B cell (primary cell): ENCODE measurements at regions of chr7 and their contacts with region 1.

Region 1: DNA sequence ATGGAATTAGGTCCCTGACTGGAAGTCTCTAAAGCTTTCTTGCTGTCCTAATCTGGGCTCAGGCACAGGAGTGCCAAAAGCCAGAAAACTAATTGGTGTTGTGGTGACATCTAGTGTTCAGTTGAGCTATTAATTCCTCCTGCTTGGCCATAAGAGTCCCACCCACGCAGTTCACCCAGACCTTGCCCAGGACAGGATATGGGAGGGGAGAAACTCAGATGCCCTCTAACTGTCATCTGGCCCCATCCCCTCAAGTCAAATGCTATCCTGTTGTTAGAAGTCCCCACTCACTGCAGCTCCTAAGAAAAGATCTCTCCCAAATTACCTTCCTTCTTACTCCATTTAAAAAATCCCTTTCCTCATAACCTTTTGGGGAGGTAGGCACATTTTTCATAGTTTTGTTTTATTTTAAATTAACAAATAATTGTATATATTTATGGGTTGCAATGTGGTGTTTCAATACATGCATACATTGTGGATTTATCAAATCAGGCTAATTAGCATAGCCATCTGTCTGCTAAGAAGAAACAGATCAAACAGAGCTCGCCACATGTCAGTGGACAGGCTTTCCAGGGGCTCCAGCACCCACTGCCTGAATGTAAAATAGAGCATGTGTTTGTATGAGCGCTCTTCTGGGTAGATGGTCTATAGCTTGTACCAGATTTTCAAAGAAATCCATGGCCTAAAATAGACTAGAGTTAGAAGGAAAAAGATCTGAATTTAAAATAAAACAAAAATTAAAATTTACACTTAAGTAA is 84.0 kb downstream of the GSAP start:
- DNase-seq: peak; percentile 80
- ATAC-seq: peak; percentile 70
- H3K4me3 ChIP-seq: no peak overlapping the region
- H3K4me3 Mint-ChIP-seq: peak overlapping the region; percentile 38
- H3K27ac ChIP-seq: no peak overlapping the region
- H3K27ac Mint-ChIP-seq: peak overlapping the region; percentile 83
- H3K4me1 ChIP-seq: peaks cover 51 to 52% of the 10 kb centered on the region in 2 donors
- H3K4me1 Mint-ChIP-seq: peaks cover 49% of the 10 kb centered on the region
- H3K27me3 ChIP-seq: no peaks in the 10 kb centered on the region
- H3K27me3 Mint-ChIP-seq: no peaks in the 10 kb centered on the region
- CTCF ChIP-seq: peak; percentile 75

Region 2: GRCh38 chr7:77188731-77189437 is 143.2 kb before region 1 on chr7:
- CTCF ChIA-PET with region 1: interaction called, 5 read pairs
- POLR2A ChIA-PET with region 1: no interaction called
- intact Hi-C with region 1: loop called (anchors 2 kb)
- DNase-seq: no peak
- ATAC-seq: no peak
- H3K4me3 ChIP-seq: no peak overlapping the region
- H3K4me3 Mint-ChIP-seq: no peak overlapping the region
- H3K27ac ChIP-seq: no peak overlapping the region
- H3K27ac Mint-ChIP-seq: no peak overlapping the region
- H3K4me1 ChIP-seq: peaks cover 24 to 25% of the 10 kb centered on the region in 2 donors
- H3K4me1 Mint-ChIP-seq: peaks cover 27% of the 10 kb centered on the region
- H3K27me3 ChIP-seq: no peaks in the 10 kb centered on the region
- H3K27me3 Mint-ChIP-seq: no peaks in the 10 kb centered on the region
- CTCF ChIP-seq: no peak

Region 3: GRCh38 chr7:77252506-77252905 is 79.6 kb before region 1 on chr7:
- CTCF ChIA-PET with region 1: interaction called, 123 read pairs
- POLR2A ChIA-PET with region 1: interaction called, 3 read pairs
- intact Hi-C with region 1: loop called (anchors 1 kb)
- DNase-seq: no peak
- ATAC-seq: no peak
- H3K4me3 ChIP-seq: no peak overlapping the region
- H3K4me3 Mint-ChIP-seq: no peak overlapping the region
- H3K27ac ChIP-seq: no peak overlapping the region
- H3K27ac Mint-ChIP-seq: no peak overlapping the region
- H3K4me1 ChIP-seq: no peaks in the 10 kb centered on the region
- H3K4me1 Mint-ChIP-seq: no peaks in the 10 kb centered on the region
- H3K27me3 ChIP-seq: no peaks in the 10 kb centered on the region
- H3K27me3 Mint-ChIP-seq: no peaks in the 10 kb centered on the region
- CTCF ChIP-seq: no peak

Region 4: GRCh38 chr7:77315182-77315591 is 16.9 kb before region 1 on chr7:
- CTCF ChIA-PET with region 1: interaction called, 11 read pairs
- POLR2A ChIA-PET with region 1: no interaction called
- intact Hi-C with region 1: no loop called
- DNase-seq: no peak
- ATAC-seq: no peak
- H3K4me3 ChIP-seq: no peak overlapping the region
- H3K4me3 Mint-ChIP-seq: no peak overlapping the region
- H3K27ac ChIP-seq: no peak overlapping the region
- H3K27ac Mint-ChIP-seq: no peak overlapping the region
- H3K4me1 ChIP-seq: no peaks in the 10 kb centered on the region
- H3K4me1 Mint-ChIP-seq: peaks cover 7% of the 10 kb centered on the region
- H3K27me3 ChIP-seq: no peaks in the 10 kb centered on the region
- H3K27me3 Mint-ChIP-seq: no peaks in the 10 kb centered on the region
- CTCF ChIP-seq: no peak

Region 5: GRCh38 chr7:77321300-77321699 is 10.8 kb before region 1 on chr7:
- CTCF ChIA-PET with region 1: interaction called, 11 read pairs
- POLR2A ChIA-PET with region 1: no interaction called
- intact Hi-C with region 1: no loop called
- DNase-seq: no peak
- ATAC-seq: no peak
- H3K4me3 ChIP-seq: no peak overlapping the region
- H3K4me3 Mint-ChIP-seq: no peak overlapping the region
- H3K27ac ChIP-seq: no peak overlapping the region
- H3K27ac Mint-ChIP-seq: no peak overlapping the region
- H3K4me1 ChIP-seq: no peaks in the 10 kb centered on the region
- H3K4me1 Mint-ChIP-seq: peaks cover 7% of the 10 kb centered on the region
- H3K27me3 ChIP-seq: no peaks in the 10 kb centered on the region
- H3K27me3 Mint-ChIP-seq: no peaks in the 10 kb centered on the region
- CTCF ChIP-seq: no peak